ENCODE measurements at regions of chr12 and their contacts with region 1.

Region 1: DNA sequence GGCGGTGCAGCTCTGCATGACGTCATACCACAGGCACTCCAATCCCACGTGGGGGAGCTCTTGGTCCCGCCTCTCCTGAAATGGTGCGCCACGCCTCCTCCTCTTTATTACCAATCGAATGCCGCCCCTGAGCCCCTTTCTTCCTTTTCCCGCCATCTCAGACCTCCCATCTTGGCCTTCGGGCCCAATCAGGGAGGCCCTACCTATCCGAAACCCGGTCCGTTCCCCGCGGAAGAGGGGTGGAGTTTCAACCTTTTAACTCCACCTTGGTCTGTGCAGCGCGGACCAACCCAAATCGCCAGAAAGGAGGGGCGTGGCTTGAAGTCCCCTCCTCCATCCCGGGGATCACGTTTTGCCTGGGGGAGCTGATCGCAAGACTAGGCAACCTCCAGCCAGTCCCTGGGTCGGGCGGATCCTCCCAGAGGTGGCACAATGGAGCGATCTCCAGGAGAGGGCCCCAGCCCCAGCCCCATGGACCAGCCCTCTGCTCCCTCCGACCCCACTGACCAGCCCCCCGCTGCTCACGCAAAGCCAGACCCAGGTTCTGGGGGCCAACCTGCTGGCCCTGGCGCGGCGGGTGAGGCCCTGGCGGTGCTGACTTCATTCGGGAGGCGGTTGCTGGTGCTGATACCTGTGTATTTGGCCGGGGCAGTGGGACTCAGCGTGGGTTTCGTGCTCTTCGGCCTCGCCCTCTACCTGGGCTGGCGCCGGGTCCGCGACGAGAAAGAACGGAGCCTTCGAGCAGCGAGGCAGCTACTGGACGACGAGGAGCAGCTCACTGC is at the start of gene ESYT1:
- DNase-seq: peak; percentile 93 to 100 (median 96)
- ATAC-seq: peak; percentile 90
- H3K4me3 ChIP-seq: peak within 1 kb of the TSS; percentile 99
- H3K4me3 Mint-ChIP-seq: peak within 1 kb of the TSS; percentile 97
- H3K27ac ChIP-seq: peak within 1 kb of the TSS; percentile 77
- H3K27ac Mint-ChIP-seq: peak within 1 kb of the TSS; percentile 86
- H3K4me1 ChIP-seq: peaks cover 66% of the 10 kb centered on the region
- H3K4me1 Mint-ChIP-seq: peaks cover 69% of the 10 kb centered on the region
- H3K27me3 ChIP-seq: no peaks in the 10 kb centered on the region
- H3K27me3 Mint-ChIP-seq: no peaks in the 10 kb centered on the region
- CTCF ChIP-seq: no peak
- total RNA-seq, gene ESYT1: 88.5 to 90.3 TPM

Region 2: GRCh38 chr12:56098592-56098991 is 29.5 kb before region 1 on chr12:
- CTCF ChIA-PET with region 1: no interaction called
- POLR2A ChIA-PET with region 1: interaction called, 36 read pairs
- intact Hi-C with region 1: loop called in 1 of 2 experiments (anchors 1 kb)
- DNase-seq: no peak
- ATAC-seq: no peak
- H3K4me3 ChIP-seq: no peak overlapping the region
- H3K4me3 Mint-ChIP-seq: no peak overlapping the region
- H3K27ac ChIP-seq: no peak overlapping the region
- H3K27ac Mint-ChIP-seq: no peak overlapping the region
- H3K4me1 ChIP-seq: peaks cover 25% of the 10 kb centered on the region
- H3K4me1 Mint-ChIP-seq: peaks cover 34% of the 10 kb centered on the region
- H3K27me3 ChIP-seq: no peaks in the 10 kb centered on the region
- H3K27me3 Mint-ChIP-seq: no peaks in the 10 kb centered on the region
- CTCF ChIP-seq: no peak

Region 3: DNA sequence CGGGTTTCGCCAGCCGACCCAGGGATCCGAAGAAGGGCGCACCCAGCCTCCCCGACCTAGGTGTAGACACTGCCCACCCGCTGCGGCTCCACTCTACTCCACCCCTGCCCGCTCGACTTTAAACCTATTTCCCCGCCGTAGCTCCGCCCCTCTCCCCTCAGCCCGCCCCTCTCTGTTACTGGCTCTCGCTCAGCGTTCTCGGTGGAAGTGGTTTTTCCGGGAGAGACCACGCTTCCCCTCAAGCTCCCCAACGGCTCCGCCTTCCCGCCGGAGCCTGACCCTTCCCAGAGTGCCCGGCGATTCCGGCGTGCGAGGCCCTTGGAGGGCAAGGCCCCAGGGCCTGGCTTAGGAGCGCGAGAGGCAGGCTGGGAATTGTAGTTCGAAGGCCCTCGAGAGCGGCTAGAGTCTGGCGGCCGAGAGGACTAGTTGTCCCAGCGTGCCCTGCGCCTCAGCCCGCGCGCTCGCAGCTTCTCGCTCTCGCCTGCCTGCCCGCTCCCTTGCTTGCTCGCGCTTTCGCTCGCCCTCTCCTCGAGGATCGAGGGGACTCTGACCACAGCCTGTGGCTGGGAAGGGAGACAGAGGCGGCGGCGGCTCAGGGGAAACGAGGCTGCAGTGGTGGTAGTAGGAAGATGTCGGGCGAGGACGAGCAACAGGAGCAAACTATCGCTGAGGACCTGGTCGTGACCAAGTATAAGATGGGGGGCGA is 23.8 kb before region 1 on chr12 and contains the start of gene PA2G4:
- CTCF ChIA-PET with region 1: interaction called, 5 read pairs
- POLR2A ChIA-PET with region 1: interaction called, 36 read pairs
- intact Hi-C with region 1: no loop called
- DNase-seq: peak; percentile 89 to 99 (median 96)
- ATAC-seq: peak; percentile 88
- H3K4me3 ChIP-seq: peak within 1 kb of the TSS; percentile 90
- H3K4me3 Mint-ChIP-seq: peak within 1 kb of the TSS; percentile 93
- H3K27ac ChIP-seq: peak within 1 kb of the TSS; percentile 63 to 95
- H3K27ac Mint-ChIP-seq: peak within 1 kb of the TSS; percentile 100
- H3K4me1 ChIP-seq: peaks cover 48% of the 10 kb centered on the region
- H3K4me1 Mint-ChIP-seq: peaks cover 67% of the 10 kb centered on the region
- H3K27me3 ChIP-seq: no peaks in the 10 kb centered on the region
- H3K27me3 Mint-ChIP-seq: no peaks in the 10 kb centered on the region
- CTCF ChIP-seq: no peak
- total RNA-seq, gene PA2G4: 51.0 to 61.0 TPM

Region 4: GRCh38 chr12:56143870-56144269 is 15.8 kb after region 1 on chr12:
- CTCF ChIA-PET with region 1: interaction called, 26 read pairs
- POLR2A ChIA-PET with region 1: interaction called, 49 read pairs
- intact Hi-C with region 1: no loop called
- DNase-seq: no peak
- ATAC-seq: no peak
- H3K4me3 ChIP-seq: no peak overlapping the region
- H3K4me3 Mint-ChIP-seq: no peak overlapping the region
- H3K27ac ChIP-seq: peak overlapping the region in 1 of 2 donors; percentile 7
- H3K27ac Mint-ChIP-seq: peak overlapping the region; percentile 81
- H3K4me1 ChIP-seq: peaks cover 51% of the 10 kb centered on the region
- H3K4me1 Mint-ChIP-seq: peaks cover 42% of the 10 kb centered on the region
- H3K27me3 ChIP-seq: no peaks in the 10 kb centered on the region
- H3K27me3 Mint-ChIP-seq: no peaks in the 10 kb centered on the region
- CTCF ChIP-seq: no peak

Region 5: DNA sequence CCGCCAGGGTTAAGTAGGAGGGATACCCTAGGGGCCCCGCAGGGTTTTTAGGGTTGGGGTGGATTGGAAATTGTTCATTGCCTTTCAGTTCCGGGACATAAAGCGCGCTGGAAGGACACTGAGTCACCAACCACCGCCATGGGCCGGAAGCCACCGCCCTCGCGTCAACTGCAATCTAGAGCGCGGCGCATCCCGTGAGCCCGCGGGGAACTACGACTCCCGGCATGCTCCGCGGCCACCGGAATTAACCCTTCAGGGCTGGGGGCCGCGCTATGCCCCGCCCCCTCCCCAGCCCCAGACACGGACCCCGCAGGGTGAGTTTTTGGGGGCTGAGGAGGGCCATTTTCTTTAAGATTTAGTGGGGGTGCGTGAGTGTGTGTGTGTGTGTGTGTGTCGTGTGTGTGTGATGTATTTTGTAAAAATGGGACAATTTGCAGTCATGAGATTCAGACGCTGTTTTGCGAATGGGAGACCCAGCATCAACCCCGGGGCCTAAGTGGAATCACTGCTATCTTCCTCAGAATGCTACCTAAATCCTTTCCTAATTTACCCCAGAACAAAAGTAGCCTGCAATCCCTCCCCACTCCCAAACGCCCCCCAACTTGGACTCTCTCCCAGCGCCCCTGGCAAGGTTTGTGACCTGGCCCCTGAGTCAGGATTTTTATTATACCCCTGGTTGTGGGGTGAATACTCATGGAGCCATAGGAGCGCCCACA is 24.4 kb after region 1 on chr12 and contains the start of gene MYL6B:
- CTCF ChIA-PET with region 1: interaction called, 36 read pairs
- POLR2A ChIA-PET with region 1: interaction called, 50 read pairs
- intact Hi-C with region 1: loop called (anchors 1 to 2 kb)
- DNase-seq: peak; percentile 85 to 96 (median 91)
- ATAC-seq: peak; percentile 88
- H3K4me3 ChIP-seq: peak within 1 kb of the TSS; percentile 76
- H3K4me3 Mint-ChIP-seq: peak within 1 kb of the TSS; percentile 94
- H3K27ac ChIP-seq: peak within 1 kb of the TSS; percentile 75 to 87
- H3K27ac Mint-ChIP-seq: peak within 1 kb of the TSS; percentile 94
- H3K4me1 ChIP-seq: peaks cover 31% of the 10 kb centered on the region
- H3K4me1 Mint-ChIP-seq: peaks cover 29% of the 10 kb centered on the region
- H3K27me3 ChIP-seq: no peaks in the 10 kb centered on the region
- H3K27me3 Mint-ChIP-seq: no peaks in the 10 kb centered on the region
- CTCF ChIP-seq: no peak
- total RNA-seq, gene MYL6B: 6.2 to 6.4 TPM

Region 6: DNA sequence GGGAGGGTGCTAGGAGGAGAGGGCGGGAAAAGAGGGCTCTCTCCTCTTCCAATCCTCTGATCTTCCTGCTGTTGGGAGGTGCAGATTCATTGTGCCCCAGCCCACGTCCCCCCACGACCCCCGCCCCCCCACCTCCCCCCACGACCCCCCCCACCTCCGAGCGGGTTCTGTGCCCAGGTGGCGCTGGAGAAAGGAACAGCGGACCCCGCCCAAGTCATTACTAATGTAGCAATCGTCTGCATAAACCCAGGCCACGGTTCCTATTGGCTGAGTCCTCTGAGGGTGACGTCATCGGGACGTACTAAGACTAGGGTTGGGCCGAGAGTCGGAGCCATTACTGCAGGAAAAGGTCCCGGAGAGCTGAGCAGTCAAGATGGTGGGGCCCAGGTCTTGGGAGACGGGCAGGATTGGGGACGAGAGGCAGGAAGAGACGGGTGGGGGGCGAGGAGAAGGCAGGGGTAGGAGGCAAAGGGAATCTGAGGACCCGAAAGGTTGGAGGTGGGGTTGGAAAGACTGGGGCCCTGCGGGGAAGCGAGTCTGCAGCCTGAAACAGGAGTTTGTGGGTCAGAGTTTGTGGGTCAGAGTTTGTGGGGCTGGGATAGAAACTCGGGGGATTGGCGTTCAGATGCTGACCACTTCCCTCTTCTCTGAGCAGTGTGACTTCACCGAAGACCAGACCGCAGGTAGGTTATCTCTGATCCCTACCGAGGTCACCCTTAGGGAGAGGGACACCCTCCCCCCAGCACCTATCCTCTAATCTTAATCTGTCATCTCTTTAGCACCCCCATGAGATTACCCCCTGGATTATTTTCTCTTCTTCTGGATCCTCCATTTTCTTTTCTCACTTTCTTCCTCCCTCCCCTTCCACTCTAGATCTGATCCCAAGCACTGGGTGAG is 30.2 kb after region 1 on chr12 and contains the start of gene MYL6:
- CTCF ChIA-PET with region 1: interaction called, 10 read pairs
- POLR2A ChIA-PET with region 1: interaction called, 89 read pairs
- intact Hi-C with region 1: loop called (anchors 1 kb)
- DNase-seq: peak; percentile 77 to 98 (median 86)
- ATAC-seq: peak; percentile 80
- H3K4me3 ChIP-seq: peak within 1 kb of the TSS; percentile 78
- H3K4me3 Mint-ChIP-seq: peak within 1 kb of the TSS; percentile 96
- H3K27ac ChIP-seq: peak within 1 kb of the TSS; percentile 84 to 92
- H3K27ac Mint-ChIP-seq: peak within 1 kb of the TSS; percentile 92
- H3K4me1 ChIP-seq: peaks cover 52% of the 10 kb centered on the region
- H3K4me1 Mint-ChIP-seq: peaks cover 40% of the 10 kb centered on the region
- H3K27me3 ChIP-seq: no peaks in the 10 kb centered on the region
- H3K27me3 Mint-ChIP-seq: no peaks in the 10 kb centered on the region
- CTCF ChIP-seq: peak; percentile 6
- total RNA-seq, gene MYL6: 670 to 673 TPM

Region 7: GRCh38 chr12:56299853-56300643 is 172.0 kb after region 1 on chr12 and contains the start of gene CS:
- CTCF ChIA-PET with region 1: no interaction called
- POLR2A ChIA-PET with region 1: no interaction called
- intact Hi-C with region 1: loop called in 1 of 2 experiments (anchors 2 kb)
- DNase-seq: peak; percentile 95 to 99 (median 98)
- ATAC-seq: peak; percentile 91
- H3K4me3 ChIP-seq: peak within 1 kb of the TSS; percentile 72
- H3K4me3 Mint-ChIP-seq: peak within 1 kb of the TSS; percentile 98
- H3K27ac ChIP-seq: peak within 1 kb of the TSS; percentile 91 to 96
- H3K27ac Mint-ChIP-seq: peak within 1 kb of the TSS; percentile 97
- H3K4me1 ChIP-seq: peaks cover 56% of the 10 kb centered on the region
- H3K4me1 Mint-ChIP-seq: peaks cover 68% of the 10 kb centered on the region
- H3K27me3 ChIP-seq: no peaks in the 10 kb centered on the region
- H3K27me3 Mint-ChIP-seq: no peaks in the 10 kb centered on the region
- CTCF ChIP-seq: no peak
- total RNA-seq, gene CS: 139 to 145 TPM